Activated CD4-positive, alpha-beta memory T cell treated with anti-CD3 and anti-CD28 coated beads, Interleukin-2, amount 10 ng/mL, durations not matched to agents 7 days and 5 days (primary cell): ENCODE measurements at regions of chr14 and their contacts with region 1.

Region 1: GRCh38 chr14:22556990-22557623 is 31.9 kb downstream of the DAD1 start:
- DNase-seq: peak; percentile 90
- H3K4me3 Mint-ChIP-seq: peak overlapping the region; percentile 76
- H3K27ac Mint-ChIP-seq: peak overlapping the region; percentile 95
- H3K4me1 Mint-ChIP-seq: peaks cover 90% of the 10 kb centered on the region
- H3K27me3 Mint-ChIP-seq: peaks cover 2% of the 10 kb centered on the region

Region 2: DNA sequence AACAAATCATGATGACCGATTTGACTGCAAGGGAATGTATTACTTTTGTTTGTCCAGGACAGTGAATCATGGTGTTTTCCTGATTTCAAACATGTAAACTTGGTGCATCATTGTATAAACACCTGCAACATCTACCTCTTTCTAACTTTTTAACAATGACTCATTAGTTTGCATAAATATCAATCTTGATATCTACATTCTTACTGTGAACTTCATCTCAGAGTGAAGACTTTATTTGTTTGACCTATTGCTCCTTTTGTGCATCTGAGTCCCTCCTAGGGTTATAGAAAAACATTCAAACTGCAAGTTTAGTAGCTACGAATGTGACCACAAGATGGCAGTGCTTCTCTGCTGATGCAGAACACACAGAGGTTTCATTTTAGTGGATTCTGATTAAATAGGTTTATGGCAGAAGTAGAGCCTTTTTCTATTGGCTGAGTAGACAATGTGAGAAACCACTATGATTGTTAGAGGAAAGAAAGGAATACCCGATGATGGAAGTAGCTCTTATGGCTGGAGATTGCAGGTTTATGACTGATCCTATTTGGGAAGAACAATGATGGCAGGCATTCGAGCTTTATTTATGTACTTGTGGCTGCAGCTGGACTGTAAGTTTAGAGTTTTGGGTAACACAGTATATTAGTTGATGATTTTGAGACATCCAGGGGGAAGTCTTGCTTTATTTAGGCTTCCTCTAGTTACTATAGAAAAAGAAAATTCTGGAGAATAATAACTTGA is 639.2 kb before region 1 on chr14:
- CTCF ChIA-PET with region 1: interaction called, 7 read pairs
- POLR2A ChIA-PET with region 1: interaction called, 27 read pairs
- DNase-seq: peak; percentile 66
- H3K4me3 Mint-ChIP-seq: peak overlapping the region; percentile 71
- H3K27ac Mint-ChIP-seq: peak overlapping the region; percentile 74
- H3K4me1 Mint-ChIP-seq: peaks cover 69% of the 10 kb centered on the region
- H3K27me3 Mint-ChIP-seq: no peaks in the 10 kb centered on the region

Region 3: GRCh38 chr14:22099942-22100763 is 457.0 kb before region 1 on chr14:
- CTCF ChIA-PET with region 1: interaction called, 6 read pairs
- POLR2A ChIA-PET with region 1: interaction called, 14 read pairs
- DNase-seq: peak; percentile 66
- H3K4me3 Mint-ChIP-seq: no peak overlapping the region
- H3K27ac Mint-ChIP-seq: no peak overlapping the region
- H3K4me1 Mint-ChIP-seq: peaks cover 56% of the 10 kb centered on the region
- H3K27me3 Mint-ChIP-seq: no peaks in the 10 kb centered on the region

Region 4: DNA sequence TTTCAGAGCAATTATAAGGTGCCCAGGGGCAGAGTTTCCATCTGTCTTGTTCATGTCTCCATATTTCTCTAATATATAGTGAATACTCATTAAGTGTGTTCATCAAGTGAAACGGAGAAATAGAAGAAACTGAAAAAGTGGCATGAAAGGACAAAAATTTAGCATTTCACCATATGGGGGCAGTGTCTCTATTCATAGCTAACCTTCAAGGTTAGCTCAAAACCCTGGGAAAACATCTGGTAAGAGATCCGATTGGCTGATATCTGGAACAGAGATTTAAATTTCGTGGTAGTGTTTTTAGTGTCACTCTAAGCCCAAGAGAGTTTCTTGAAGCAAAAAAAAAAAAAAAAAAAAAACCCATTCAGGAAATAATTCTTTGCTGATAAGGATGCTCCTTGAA is 335.6 kb before region 1 on chr14:
- CTCF ChIA-PET with region 1: interaction called, 16 read pairs
- POLR2A ChIA-PET with region 1: no interaction called
- DNase-seq: no peak
- H3K4me3 Mint-ChIP-seq: peak overlapping the region; percentile 50
- H3K27ac Mint-ChIP-seq: no peak overlapping the region
- H3K4me1 Mint-ChIP-seq: peaks cover 14% of the 10 kb centered on the region
- H3K27me3 Mint-ChIP-seq: no peaks in the 10 kb centered on the region

Region 5: DNA sequence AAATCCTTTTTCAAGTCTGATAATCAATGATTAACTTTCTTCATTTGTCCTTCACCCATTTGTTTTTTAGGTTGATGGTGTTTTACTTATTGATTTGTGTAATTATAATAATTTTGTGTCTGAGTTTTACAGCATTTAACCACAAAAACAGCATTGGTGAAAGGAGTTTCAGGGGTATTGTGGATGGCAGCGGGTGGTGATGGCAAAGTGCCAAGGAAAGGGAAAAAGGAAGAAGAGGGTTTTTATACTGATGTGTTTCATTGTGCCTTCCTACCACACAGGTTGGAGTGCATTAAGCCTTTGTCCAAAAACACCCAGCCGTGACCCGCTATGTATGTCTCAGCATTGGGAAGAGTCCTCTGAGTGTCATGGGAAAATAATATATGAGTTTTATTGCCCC is 118.4 kb before region 1 on chr14:
- CTCF ChIA-PET with region 1: no interaction called
- POLR2A ChIA-PET with region 1: no interaction called
- DNase-seq: no peak
- H3K4me3 Mint-ChIP-seq: no peak overlapping the region
- H3K27ac Mint-ChIP-seq: no peak overlapping the region
- H3K4me1 Mint-ChIP-seq: no peaks in the 10 kb centered on the region
- H3K27me3 Mint-ChIP-seq: no peaks in the 10 kb centered on the region

Region 6: DNA sequence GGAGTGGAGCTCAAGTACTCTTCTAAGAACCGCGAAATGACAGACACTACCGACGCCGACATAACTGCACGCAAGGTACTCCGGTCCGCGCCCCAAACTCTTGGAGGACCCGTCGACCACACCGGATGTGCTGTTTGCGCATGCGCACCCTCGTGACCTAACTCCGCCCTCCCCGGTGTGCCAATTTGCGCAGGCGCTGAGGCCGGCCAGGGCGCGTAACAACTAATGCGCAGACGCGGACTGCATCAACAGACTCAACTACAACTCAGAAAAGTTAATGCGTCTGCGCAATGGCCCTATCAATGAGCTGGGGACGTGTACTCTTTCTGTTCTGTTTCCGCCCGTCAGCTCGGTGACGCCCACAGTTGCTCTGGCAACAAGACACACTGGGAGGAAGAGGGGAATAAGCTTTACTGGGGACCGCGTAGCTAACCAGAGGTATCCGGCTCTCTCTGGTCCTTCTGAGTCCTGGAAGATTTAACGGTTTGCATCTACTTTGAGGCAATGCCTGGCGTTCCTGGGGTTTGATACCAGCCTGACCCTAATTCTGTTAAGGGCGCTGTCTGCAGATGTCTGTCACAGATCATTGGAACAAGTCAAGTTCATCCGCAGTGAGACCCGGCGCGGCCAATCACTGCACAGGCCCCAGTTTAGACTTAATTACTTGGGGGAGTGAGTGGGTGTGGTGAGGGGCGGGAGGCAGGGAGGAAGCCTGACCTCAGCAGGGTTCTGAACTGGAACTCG is 32.2 kb after region 1 on chr14 and contains the start of gene DAD1:
- CTCF ChIA-PET with region 1: interaction called, 28 read pairs
- POLR2A ChIA-PET with region 1: interaction called, 53 read pairs
- DNase-seq: peak; percentile 100
- H3K4me3 Mint-ChIP-seq: peak within 1 kb of the TSS; percentile 93
- H3K27ac Mint-ChIP-seq: peak within 1 kb of the TSS; percentile 98
- H3K4me1 Mint-ChIP-seq: peaks cover 55% of the 10 kb centered on the region
- H3K27me3 Mint-ChIP-seq: peaks cover 6% of the 10 kb centered on the region
- total RNA-seq, gene DAD1: 160 to 167 TPM

Region 7: DNA sequence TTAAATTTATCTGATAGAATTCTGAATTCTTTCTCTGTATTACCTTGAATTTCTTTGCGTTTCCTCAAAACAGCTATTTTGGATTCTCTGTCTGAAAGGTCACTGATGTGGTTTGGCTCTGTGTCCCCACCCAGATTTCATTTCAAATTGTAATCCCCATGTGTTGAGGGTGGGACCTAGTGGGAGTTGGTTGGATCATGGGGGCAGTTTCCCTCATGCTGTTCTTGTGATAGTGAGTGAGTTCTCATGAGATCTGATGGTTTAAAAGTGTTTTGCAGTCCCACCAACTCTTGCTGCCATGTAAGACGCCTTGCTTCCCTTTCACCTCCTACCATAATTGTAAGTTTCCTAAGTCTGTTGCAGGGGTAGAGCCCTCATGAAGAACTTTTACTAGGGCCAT is 121.1 kb after region 1 on chr14:
- CTCF ChIA-PET with region 1: no interaction called
- POLR2A ChIA-PET with region 1: no interaction called
- DNase-seq: no peak
- H3K4me3 Mint-ChIP-seq: no peak overlapping the region
- H3K27ac Mint-ChIP-seq: no peak overlapping the region
- H3K4me1 Mint-ChIP-seq: no peaks in the 10 kb centered on the region
- H3K27me3 Mint-ChIP-seq: peaks cover 51% of the 10 kb centered on the region

Region 8: DNA sequence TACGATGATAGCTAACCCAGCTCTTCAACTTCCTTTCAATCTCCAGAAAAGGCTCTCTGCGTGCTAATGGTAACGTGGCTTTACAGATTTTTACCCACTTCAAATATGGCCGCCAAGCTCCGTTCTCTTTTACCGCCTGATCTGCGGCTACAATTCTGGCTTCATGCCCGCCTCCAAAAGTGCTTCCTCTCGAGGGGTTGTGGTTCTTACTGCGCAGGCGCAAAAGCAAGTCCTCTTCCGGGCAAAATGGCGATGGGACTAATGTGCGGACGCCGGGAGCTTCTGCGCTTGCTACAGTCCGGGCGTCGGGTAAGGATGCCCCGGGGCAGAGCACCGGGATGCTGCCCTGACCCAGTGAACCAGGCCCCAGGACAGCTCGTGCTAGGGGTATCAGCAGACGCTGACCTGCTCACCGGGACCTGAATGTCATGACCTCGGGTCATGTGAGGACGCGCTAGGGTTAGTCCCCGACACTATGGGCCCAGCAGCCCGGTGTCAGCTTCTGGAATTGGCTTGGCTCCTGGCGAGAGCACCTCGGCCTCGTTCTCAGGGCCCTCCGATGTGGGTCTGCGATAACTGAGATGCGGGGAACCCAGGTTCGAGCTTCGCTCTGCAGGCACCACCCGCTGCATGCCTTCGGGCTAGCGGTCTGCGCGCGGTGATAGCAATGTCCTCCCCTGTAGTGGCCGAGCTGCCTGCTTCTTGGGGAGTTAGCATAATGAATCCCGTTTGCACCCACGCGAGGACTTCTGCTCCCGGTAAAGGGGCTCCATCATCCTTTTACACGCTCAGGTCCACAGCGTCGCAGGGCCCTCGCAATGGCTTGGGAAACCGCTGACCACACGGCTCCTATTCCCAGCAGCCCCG is 209.6 kb after region 1 on chr14 and contains the start of gene OXA1L:
- CTCF ChIA-PET with region 1: interaction called, 12 read pairs
- POLR2A ChIA-PET with region 1: interaction called, 19 read pairs
- DNase-seq: peak; percentile 97
- H3K4me3 Mint-ChIP-seq: peak within 1 kb of the TSS; percentile 93
- H3K27ac Mint-ChIP-seq: peak within 1 kb of the TSS; percentile 97
- H3K4me1 Mint-ChIP-seq: peaks cover 35% of the 10 kb centered on the region
- H3K27me3 Mint-ChIP-seq: no peaks in the 10 kb centered on the region
- total RNA-seq, gene OXA1L: 118 to 122 TPM